ENCODE measurements at regions of chr3 and their contacts with region 1.

Region 1: DNA sequence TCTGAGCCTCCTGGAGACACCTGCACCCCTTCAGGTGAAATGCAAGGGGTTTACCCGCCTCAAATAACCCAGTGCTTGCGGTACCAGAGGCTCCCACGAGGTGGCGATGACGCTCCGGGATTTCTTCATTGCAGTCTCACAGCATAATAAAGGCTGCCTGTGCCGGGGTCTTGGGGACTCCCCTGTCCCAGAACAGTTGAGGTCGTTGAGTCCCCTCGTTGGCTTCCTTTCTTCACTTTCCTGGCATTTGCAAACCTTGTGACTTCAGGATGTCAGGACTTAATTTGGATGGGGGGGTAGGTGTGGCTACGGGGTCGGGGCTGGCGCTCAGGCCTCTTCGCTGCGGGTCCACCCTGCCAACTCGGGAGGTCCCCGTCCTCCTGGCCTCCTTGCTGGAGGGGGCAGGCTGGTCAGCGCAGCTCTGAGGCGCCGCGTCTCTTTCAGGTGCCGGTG is 1.3 kb downstream of the GNAT1 start:
- DNase-seq: peak; percentile 69 to 88 (median 82)
- ATAC-seq: peak; percentile 34
- H3K4me3 ChIP-seq: no peak overlapping the region
- H3K4me3 Mint-ChIP-seq: no peak overlapping the region
- H3K27ac ChIP-seq: no peak overlapping the region
- H3K27ac Mint-ChIP-seq: no peak overlapping the region
- H3K4me1 ChIP-seq: peaks cover 20% of the 10 kb centered on the region
- H3K4me1 Mint-ChIP-seq: peaks cover 15% of the 10 kb centered on the region
- H3K27me3 ChIP-seq: peaks cover 7 to 15% of the 10 kb centered on the region in 2 experiments
- H3K27me3 Mint-ChIP-seq: peaks cover 6% of the 10 kb centered on the region
- CTCF ChIP-seq: peak; percentile 81

Region 2: GRCh38 chr3:50211930-50212329 is 19.2 kb after region 1 on chr3:
- CTCF ChIA-PET with region 1: interaction called, 95 read pairs
- POLR2A ChIA-PET with region 1: no interaction called
- intact Hi-C with region 1: no loop called
- DNase-seq: no peak
- ATAC-seq: no peak
- H3K4me3 ChIP-seq: no peak overlapping the region
- H3K4me3 Mint-ChIP-seq: no peak overlapping the region
- H3K27ac ChIP-seq: no peak overlapping the region
- H3K27ac Mint-ChIP-seq: no peak overlapping the region
- H3K4me1 ChIP-seq: no peaks in the 10 kb centered on the region
- H3K4me1 Mint-ChIP-seq: no peaks in the 10 kb centered on the region
- H3K27me3 ChIP-seq: no peaks in the 10 kb centered on the region
- H3K27me3 Mint-ChIP-seq: peaks cover 5% of the 10 kb centered on the region
- CTCF ChIP-seq: no peak

Region 3: GRCh38 chr3:50227390-50228183 is 34.9 kb after region 1 on chr3:
- CTCF ChIA-PET with region 1: interaction called, 197 read pairs
- POLR2A ChIA-PET with region 1: interaction called, 14 read pairs
- intact Hi-C with region 1: loop called (anchors 1 kb)
- DNase-seq: peak; percentile 76 to 95 (median 91)
- ATAC-seq: peak; percentile 81
- H3K4me3 ChIP-seq: peak overlapping the region; percentile 69 to 78
- H3K4me3 Mint-ChIP-seq: peak overlapping the region; percentile 91
- H3K27ac ChIP-seq: peak overlapping the region; percentile 56 to 66
- H3K27ac Mint-ChIP-seq: peak overlapping the region; percentile 91
- H3K4me1 ChIP-seq: peaks cover 17% of the 10 kb centered on the region
- H3K4me1 Mint-ChIP-seq: peaks cover 22% of the 10 kb centered on the region
- H3K27me3 ChIP-seq: no peaks in the 10 kb centered on the region
- H3K27me3 Mint-ChIP-seq: no peaks in the 10 kb centered on the region
- CTCF ChIP-seq: peak; percentile 73

Region 4: DNA sequence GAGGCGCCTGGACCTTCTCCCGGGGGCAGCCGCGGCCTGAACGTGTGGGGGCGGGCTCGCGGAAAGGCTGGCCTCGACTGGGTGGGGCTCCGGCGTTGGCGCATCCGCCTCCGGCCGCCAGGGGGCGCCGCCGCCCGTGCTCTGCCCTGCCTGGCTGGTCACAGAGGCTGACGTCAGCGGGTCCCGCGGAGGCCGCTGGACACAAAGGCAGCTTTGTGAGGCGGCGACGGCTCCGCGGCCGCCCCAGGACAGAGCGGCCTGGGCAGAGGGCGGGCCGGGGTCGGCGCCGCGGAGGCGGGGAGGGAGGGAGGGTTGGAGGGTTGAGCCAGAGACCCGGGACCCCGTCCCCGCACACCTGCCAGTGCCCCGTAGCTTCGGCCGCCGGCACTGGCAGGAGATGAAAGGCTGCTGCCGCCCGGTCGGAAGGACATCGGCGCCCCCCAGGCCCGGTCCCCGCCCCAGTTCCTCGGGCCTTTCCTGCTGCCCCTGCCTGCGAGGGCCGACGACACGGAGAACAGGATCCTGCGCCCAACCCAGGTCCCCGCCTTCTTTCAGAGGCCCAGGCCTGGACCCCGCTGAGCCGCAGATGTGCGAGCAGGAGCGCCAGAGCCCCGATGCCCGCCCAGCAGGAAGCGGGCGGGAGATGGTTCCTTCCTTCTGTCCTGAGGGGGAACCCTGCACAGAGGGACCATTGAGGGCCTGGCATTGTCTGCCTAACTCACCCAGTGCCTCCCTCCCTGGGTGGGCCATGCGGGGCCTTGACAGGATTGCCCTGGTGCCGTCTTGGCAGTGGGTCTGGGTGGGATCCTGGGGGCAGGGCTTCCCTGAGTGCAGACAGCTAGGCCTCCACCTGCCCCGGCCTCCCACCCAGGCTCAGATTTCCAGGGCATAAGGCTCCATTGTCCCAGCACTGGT is 67.6 kb after region 1 on chr3:
- CTCF ChIA-PET with region 1: interaction called, 78 read pairs
- POLR2A ChIA-PET with region 1: interaction called, 3 read pairs
- intact Hi-C with region 1: no loop called
- DNase-seq: peak; percentile 55 to 90 (median 81)
- ATAC-seq: peak; percentile 92
- H3K4me3 ChIP-seq: peak overlapping the region; percentile 49 to 53
- H3K4me3 Mint-ChIP-seq: peak overlapping the region; percentile 75
- H3K27ac ChIP-seq: peak overlapping the region; percentile 62 to 68
- H3K27ac Mint-ChIP-seq: peak overlapping the region; percentile 66
- H3K4me1 ChIP-seq: peaks cover 6% of the 10 kb centered on the region
- H3K4me1 Mint-ChIP-seq: peaks cover 7% of the 10 kb centered on the region
- H3K27me3 ChIP-seq: no peaks in the 10 kb centered on the region
- H3K27me3 Mint-ChIP-seq: no peaks in the 10 kb centered on the region
- CTCF ChIP-seq: peak; percentile 92

Region 5: GRCh38 chr3:50272911-50273693 is 80.4 kb after region 1 on chr3:
- CTCF ChIA-PET with region 1: interaction called, 79 read pairs
- POLR2A ChIA-PET with region 1: no interaction called
- intact Hi-C with region 1: loop called (anchors 1 kb)
- DNase-seq: peak; percentile 71 to 93 (median 88)
- ATAC-seq: peak; percentile 89
- H3K4me3 ChIP-seq: peak overlapping the region; percentile 8 to 17
- H3K4me3 Mint-ChIP-seq: peak overlapping the region; percentile 68
- H3K27ac ChIP-seq: no peak overlapping the region
- H3K27ac Mint-ChIP-seq: no peak overlapping the region
- H3K4me1 ChIP-seq: peaks cover 31% of the 10 kb centered on the region
- H3K4me1 Mint-ChIP-seq: peaks cover 25% of the 10 kb centered on the region
- H3K27me3 ChIP-seq: peaks cover 24 to 31% of the 10 kb centered on the region in 2 experiments
- H3K27me3 Mint-ChIP-seq: peaks cover 34% of the 10 kb centered on the region
- CTCF ChIP-seq: peak; percentile 93

Region 6: DNA sequence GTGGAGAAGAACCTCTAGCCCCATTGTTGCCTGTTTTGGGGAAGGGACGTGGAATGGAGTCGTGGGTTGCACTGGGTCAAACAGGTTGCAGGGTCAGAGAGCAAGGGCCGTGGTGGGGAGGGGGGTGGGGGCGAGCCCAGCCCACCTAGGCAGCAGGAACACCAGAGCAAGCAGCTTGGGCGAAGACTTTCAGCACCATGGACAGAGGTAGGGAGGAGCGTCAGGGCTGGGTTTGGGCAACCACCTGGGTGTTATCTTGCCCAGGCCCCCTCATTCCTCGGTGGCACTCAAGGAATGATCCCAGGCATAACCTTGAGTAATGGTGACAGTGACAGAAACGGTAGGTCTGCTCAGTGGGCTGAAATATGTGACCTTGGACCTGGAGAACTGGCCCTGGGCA is 212.5 kb after region 1 on chr3:
- CTCF ChIA-PET with region 1: no interaction called
- POLR2A ChIA-PET with region 1: no interaction called
- intact Hi-C with region 1: no loop called
- DNase-seq: peak in 4 of 9 experiments; percentile 13 to 42 (median 36)
- ATAC-seq: no peak
- H3K4me3 ChIP-seq: no peak overlapping the region
- H3K4me3 Mint-ChIP-seq: no peak overlapping the region
- H3K27ac ChIP-seq: no peak overlapping the region
- H3K27ac Mint-ChIP-seq: no peak overlapping the region
- H3K4me1 ChIP-seq: no peaks in the 10 kb centered on the region
- H3K4me1 Mint-ChIP-seq: no peaks in the 10 kb centered on the region
- H3K27me3 ChIP-seq: no peaks in the 10 kb centered on the region
- H3K27me3 Mint-ChIP-seq: no peaks in the 10 kb centered on the region
- CTCF ChIP-seq: no peak

Region 7: GRCh38 chr3:50550079-50550741 is 357.5 kb after region 1 on chr3:
- CTCF ChIA-PET with region 1: no interaction called
- POLR2A ChIA-PET with region 1: no interaction called
- intact Hi-C with region 1: loop called in 1 of 2 experiments (anchors 5 kb)
- DNase-seq: peak; percentile 43 to 75 (median 71)
- ATAC-seq: peak; percentile 89
- H3K4me3 ChIP-seq: no peak overlapping the region
- H3K4me3 Mint-ChIP-seq: no peak overlapping the region
- H3K27ac ChIP-seq: no peak overlapping the region
- H3K27ac Mint-ChIP-seq: no peak overlapping the region
- H3K4me1 ChIP-seq: no peaks in the 10 kb centered on the region
- H3K4me1 Mint-ChIP-seq: no peaks in the 10 kb centered on the region
- H3K27me3 ChIP-seq: no peaks in the 10 kb centered on the region
- H3K27me3 Mint-ChIP-seq: no peaks in the 10 kb centered on the region
- CTCF ChIP-seq: peak; percentile 82

Measured in CD8-positive, alpha-beta T cell (primary cell).